Mammary epithelial cell (primary cell): ENCODE measurements at regions of chr7 and their contacts with region 1.

Region 1: GRCh38 chr7:11931306-11931705 is 99.3 kb upstream of the THSD7A start:
- DNase-seq: no peak
- H3K4me3 ChIP-seq: no peak overlapping the region
- H3K27ac ChIP-seq: no peak overlapping the region
- H3K4me1 ChIP-seq: no peaks in the 10 kb centered on the region
- H3K27me3 ChIP-seq: no peaks in the 10 kb centered on the region
- CTCF ChIP-seq: no peak

Region 2: DNA sequence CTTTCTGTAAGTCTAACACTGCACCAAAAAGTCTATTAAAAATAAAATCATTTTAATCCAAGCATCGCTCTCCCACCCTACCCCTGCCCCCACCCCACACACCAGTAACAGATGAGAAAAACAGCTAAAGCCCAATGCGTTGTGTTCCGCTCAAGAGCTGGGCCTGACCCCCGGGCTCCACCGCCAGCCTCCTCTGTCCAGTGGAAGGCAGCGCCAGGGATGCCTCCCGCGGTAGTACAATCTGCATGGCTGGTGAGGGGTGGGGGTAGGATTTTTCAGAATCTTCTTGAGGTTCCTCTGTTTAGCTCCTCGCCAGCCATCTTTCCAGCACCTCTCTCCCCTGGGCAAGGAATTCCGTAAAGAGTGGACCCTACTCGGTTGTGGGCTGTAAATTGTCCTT is 111.4 kb before region 1 on chr7:
- CTCF ChIA-PET with region 1: no interaction called
- dilution Hi-C with region 1: no loop called
- in situ Hi-C with region 1: no loop called
- intact Hi-C with region 1: no loop called
- DNase-seq: no peak
- H3K4me3 ChIP-seq: no peak overlapping the region
- H3K27ac ChIP-seq: no peak overlapping the region
- H3K4me1 ChIP-seq: no peaks in the 10 kb centered on the region
- H3K27me3 ChIP-seq: no peaks in the 10 kb centered on the region
- CTCF ChIP-seq: no peak

Region 3: DNA sequence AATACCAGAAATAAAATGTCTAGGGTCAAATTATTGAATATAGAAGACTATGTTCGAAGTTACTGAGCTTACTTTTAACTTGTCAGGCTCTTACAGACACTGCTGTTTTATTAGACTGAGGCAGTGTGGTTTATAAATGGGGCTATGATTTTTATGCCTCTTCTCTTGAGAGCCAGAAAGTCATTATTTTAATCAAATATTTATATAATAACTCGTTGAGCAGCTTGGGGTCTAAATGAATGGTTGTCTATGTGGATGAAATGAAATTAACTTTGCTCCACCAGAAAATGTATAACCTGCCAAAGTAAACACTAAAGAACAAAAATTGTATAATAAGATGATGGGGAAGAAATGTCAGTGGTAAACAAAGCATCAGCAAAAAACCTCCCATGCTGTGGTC is 76.3 kb after region 1 on chr7:
- CTCF ChIA-PET with region 1: no interaction called
- dilution Hi-C with region 1: no loop called
- in situ Hi-C with region 1: no loop called
- intact Hi-C with region 1: loop called (anchors 2 kb)
- DNase-seq: no peak
- H3K4me3 ChIP-seq: no peak overlapping the region
- H3K27ac ChIP-seq: no peak overlapping the region
- H3K4me1 ChIP-seq: no peaks in the 10 kb centered on the region
- H3K27me3 ChIP-seq: no peaks in the 10 kb centered on the region
- CTCF ChIP-seq: no peak